Activated CD4-positive, alpha-beta T cell treated with anti-CD3 and anti-CD28 coated beads for 36 hours (primary cell): ENCODE measurements at regions of chr1 and their contacts with region 1.

Region 1: DNA sequence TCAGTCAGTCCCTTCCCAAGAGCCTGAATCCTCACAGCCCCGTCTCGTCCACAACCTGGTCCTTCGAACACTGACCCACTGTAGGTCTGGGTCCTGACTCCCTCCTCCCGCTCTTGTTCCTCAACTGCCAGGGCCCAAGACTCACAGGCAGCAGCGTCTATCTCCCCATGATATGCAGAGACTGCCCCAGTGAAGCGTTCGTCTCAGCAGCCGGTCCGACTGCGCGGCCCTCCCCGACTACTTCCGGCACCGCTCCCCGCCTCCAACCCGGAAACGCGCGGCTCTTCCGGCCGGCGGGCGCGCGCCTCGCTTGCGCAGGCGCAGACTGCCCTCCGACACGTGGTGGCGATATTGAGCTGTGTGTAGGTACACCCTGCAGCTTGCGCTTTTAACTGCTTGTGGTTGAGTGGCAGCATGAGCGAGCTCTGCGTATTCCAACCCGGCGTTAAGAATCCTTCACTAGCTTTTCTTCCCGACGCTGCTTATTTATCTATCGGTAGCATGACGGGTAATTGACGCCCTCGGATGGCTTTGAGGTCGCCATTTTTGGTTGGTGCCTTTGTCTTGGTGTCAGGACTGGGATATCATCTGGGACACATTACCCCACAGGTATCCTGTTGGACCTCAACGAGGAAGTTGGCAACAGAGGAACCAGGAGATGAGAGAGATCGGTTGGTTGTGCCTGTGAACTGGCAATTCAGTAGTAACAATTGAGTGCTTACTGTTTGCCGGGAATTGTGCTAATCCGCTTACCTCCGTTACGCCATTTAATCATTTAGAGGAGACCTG is at the start of gene TAF12:
- DNase-seq: peak; percentile 95
- ATAC-seq: peak; percentile 81
- H3K4me3 Mint-ChIP-seq: peak within 1 kb of the TSS; percentile 98
- H3K27ac Mint-ChIP-seq: peak within 1 kb of the TSS; percentile 97
- H3K4me1 Mint-ChIP-seq: peaks cover 50% of the 10 kb centered on the region
- H3K27me3 Mint-ChIP-seq: no peaks in the 10 kb centered on the region
- total RNA-seq, gene TAF12: 23.8 to 32.5 TPM

Region 2: GRCh38 chr1:27321813-27322577 is 1321.0 kb before region 1 on chr1 and contains the start of gene TMEM222:
- CTCF ChIA-PET with region 1: no interaction called
- POLR2A ChIA-PET with region 1: no interaction called
- intact Hi-C with region 1: loop called in 1 of 2 experiments (anchors 5 kb)
- DNase-seq: peak; percentile 99
- ATAC-seq: peak; percentile 98
- H3K4me3 Mint-ChIP-seq: peak within 1 kb of the TSS; percentile 94
- H3K27ac Mint-ChIP-seq: peak within 1 kb of the TSS; percentile 90
- H3K4me1 Mint-ChIP-seq: peaks cover 41% of the 10 kb centered on the region
- H3K27me3 Mint-ChIP-seq: no peaks in the 10 kb centered on the region
- total RNA-seq, gene TMEM222: 27.5 to 31.2 TPM

Region 3: GRCh38 chr1:28329395-28330153 is 313.5 kb before region 1 on chr1:
- CTCF ChIA-PET with region 1: no interaction called
- POLR2A ChIA-PET with region 1: interaction called, 18 read pairs
- intact Hi-C with region 1: loop called in 1 of 2 experiments (anchors 1 kb)
- DNase-seq: peak; percentile 61
- ATAC-seq: peak; percentile 19
- H3K4me3 Mint-ChIP-seq: peak overlapping the region; percentile 96
- H3K27ac Mint-ChIP-seq: peak overlapping the region; percentile 97
- H3K4me1 Mint-ChIP-seq: peaks cover 39% of the 10 kb centered on the region
- H3K27me3 Mint-ChIP-seq: no peaks in the 10 kb centered on the region

Region 4: GRCh38 chr1:28510665-28511440 is 132.2 kb before region 1 on chr1:
- CTCF ChIA-PET with region 1: interaction called, 3 read pairs
- POLR2A ChIA-PET with region 1: interaction called, 22 read pairs
- intact Hi-C with region 1: loop called in 1 of 2 experiments (anchors 1 kb)
- DNase-seq: peak; percentile 34
- ATAC-seq: peak; percentile 16
- H3K4me3 Mint-ChIP-seq: peak overlapping the region; percentile 98
- H3K27ac Mint-ChIP-seq: peak overlapping the region; percentile 99
- H3K4me1 Mint-ChIP-seq: peaks cover 33% of the 10 kb centered on the region
- H3K27me3 Mint-ChIP-seq: peaks cover 1% of the 10 kb centered on the region

Region 5: GRCh38 chr1:28668191-28668955 is 25.3 kb after region 1 on chr1 and contains the start of gene GMEB1:
- CTCF ChIA-PET with region 1: interaction called, 7 read pairs
- POLR2A ChIA-PET with region 1: interaction called, 96 read pairs
- intact Hi-C with region 1: loop called (anchors 1 kb)
- DNase-seq: peak; percentile 93
- ATAC-seq: peak; percentile 72
- H3K4me3 Mint-ChIP-seq: peak within 1 kb of the TSS; percentile 84
- H3K27ac Mint-ChIP-seq: peak within 1 kb of the TSS; percentile 99
- H3K4me1 Mint-ChIP-seq: peaks cover 11% of the 10 kb centered on the region
- H3K27me3 Mint-ChIP-seq: no peaks in the 10 kb centered on the region
- total RNA-seq, gene GMEB1: 20.3 to 25.4 TPM

Region 6: DNA sequence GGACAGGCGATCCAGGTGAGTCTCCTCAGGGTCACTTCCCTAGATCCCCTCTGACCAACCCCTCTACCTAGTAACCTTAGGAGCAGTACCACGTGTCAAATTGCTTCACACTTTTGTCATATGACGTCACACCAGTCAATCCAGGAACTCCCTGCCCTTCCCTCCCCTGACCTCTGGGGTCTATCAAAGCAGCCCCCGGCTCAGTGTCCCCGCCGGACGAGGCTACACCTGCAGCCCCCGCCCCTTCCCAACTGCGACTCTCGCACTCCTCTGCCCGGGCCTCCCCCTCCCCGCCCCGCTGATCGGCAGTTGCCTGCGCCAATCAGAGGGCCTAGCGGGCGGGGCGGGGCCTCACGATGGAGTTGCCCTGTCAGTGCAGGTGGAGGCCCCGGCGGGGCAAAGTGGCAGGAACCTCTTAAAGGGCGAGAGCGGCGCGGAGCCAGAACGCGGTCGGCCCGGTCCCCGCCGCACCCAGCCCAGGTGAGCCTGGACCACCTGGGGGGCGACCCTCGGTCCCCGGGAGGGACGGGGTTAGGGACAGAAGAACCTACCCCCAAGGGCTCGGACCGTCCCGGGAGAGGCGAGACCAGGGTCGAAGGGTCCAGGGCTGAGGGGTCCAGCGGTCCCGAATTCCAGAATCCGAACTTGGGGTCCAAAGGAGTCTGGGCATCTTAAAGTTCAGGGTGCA is 243.8 kb after region 1 on chr1:
- CTCF ChIA-PET with region 1: no interaction called
- POLR2A ChIA-PET with region 1: no interaction called
- intact Hi-C with region 1: no loop called
- DNase-seq: peak; percentile 95
- ATAC-seq: peak; percentile 77
- H3K4me3 Mint-ChIP-seq: peak overlapping the region; percentile 90
- H3K27ac Mint-ChIP-seq: peak overlapping the region; percentile 88
- H3K4me1 Mint-ChIP-seq: peaks cover 43% of the 10 kb centered on the region
- H3K27me3 Mint-ChIP-seq: no peaks in the 10 kb centered on the region

Region 7: GRCh38 chr1:28914228-28915030 is 271.4 kb after region 1 on chr1 and contains the start of gene EPB41:
- CTCF ChIA-PET with region 1: no interaction called
- POLR2A ChIA-PET with region 1: no interaction called
- intact Hi-C with region 1: loop called in 1 of 2 experiments (anchors 1 kb)
- DNase-seq: peak; percentile 94
- ATAC-seq: peak; percentile 84
- H3K4me3 Mint-ChIP-seq: peak within 1 kb of the TSS; percentile 86
- H3K27ac Mint-ChIP-seq: peak within 1 kb of the TSS; percentile 93
- H3K4me1 Mint-ChIP-seq: peaks cover 47% of the 10 kb centered on the region
- H3K27me3 Mint-ChIP-seq: no peaks in the 10 kb centered on the region
- total RNA-seq, gene EPB41: 75.5 to 130 TPM